Left cardiac atrium (tissue), 4 donors: ENCODE measurements at regions of chr7 and their contacts with region 1.

Region 1: DNA sequence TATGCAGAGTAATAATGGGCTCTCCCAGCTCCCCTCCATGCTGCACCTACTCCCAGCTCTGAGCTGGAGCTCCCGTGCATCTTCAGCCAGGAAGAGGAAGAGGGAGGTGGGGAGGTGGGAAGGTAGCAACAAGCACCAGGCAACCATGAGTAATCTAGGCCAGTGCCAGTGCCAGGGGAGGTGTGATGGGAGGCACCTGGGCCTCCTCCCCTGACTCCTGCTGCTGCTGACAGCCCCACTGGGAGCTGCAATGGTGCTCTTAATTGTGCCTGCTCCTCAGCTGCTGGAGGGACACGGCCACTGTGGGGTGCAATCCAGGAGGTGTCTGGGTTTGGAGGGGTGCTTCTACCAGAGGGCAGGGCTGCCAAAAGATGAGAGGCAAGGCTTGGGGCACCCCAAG is 243.0 kb downstream of the PLXNA4 start:
- DNase-seq: peak; percentile 47
- ATAC-seq: peak; percentile 81 to 85

Region 2: GRCh38 chr7:132377015-132377414 is 43.7 kb after region 1 on chr7:
- intact Hi-C with region 1: loop called in 1 of 2 experiments (anchors 5 kb)
- DNase-seq: no peak
- ATAC-seq: no peak